Heart left ventricle (tissue), 16 donors: ENCODE measurements at regions of chr2 and their contacts with region 1.

Region 1: GRCh38 chr2:199704358-199705238 is 146.4 kb downstream of the FTCDNL1 start:
- DNase-seq: no peak
- ATAC-seq: no peak
- H3K4me3 ChIP-seq: no peak overlapping the region
- H3K27ac ChIP-seq: no peak overlapping the region
- H3K4me1 ChIP-seq: no peaks in the 10 kb centered on the region
- H3K27me3 ChIP-seq: no peaks in the 10 kb centered on the region
- CTCF ChIP-seq: peak; percentile 9 to 46 (median 38)
- POLR2A ChIP-seq: no peak

Region 2: DNA sequence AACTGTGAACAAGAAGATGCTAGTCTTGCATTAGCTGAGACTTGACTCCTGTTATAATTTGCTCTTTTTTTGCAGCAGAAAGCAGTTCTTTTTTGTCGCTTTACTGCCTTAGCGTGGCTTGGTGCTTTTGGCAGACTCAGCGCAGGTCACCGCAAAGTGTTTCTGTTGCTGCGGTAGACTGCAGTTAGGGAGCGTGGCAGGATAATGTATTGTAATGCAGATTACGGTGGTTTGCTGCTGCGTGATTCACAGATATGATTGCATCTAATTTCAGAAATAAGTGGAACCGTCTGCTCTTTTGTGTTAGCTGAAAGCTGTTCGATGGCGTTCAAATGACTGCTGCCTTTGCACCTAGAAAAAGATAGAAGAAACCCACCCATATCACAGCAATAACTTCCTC is 115.3 kb before region 1 on chr2:
- intact Hi-C with region 1: no loop called
- DNase-seq: no peak
- ATAC-seq: no peak
- H3K4me3 ChIP-seq: no peak overlapping the region
- H3K27ac ChIP-seq: no peak overlapping the region
- H3K4me1 ChIP-seq: no peaks in the 10 kb centered on the region
- H3K27me3 ChIP-seq: peaks cover 0 to 18% (median 0%) of the 10 kb centered on the region in 9 donors
- CTCF ChIP-seq: no peak
- POLR2A ChIP-seq: no peak

Region 3: DNA sequence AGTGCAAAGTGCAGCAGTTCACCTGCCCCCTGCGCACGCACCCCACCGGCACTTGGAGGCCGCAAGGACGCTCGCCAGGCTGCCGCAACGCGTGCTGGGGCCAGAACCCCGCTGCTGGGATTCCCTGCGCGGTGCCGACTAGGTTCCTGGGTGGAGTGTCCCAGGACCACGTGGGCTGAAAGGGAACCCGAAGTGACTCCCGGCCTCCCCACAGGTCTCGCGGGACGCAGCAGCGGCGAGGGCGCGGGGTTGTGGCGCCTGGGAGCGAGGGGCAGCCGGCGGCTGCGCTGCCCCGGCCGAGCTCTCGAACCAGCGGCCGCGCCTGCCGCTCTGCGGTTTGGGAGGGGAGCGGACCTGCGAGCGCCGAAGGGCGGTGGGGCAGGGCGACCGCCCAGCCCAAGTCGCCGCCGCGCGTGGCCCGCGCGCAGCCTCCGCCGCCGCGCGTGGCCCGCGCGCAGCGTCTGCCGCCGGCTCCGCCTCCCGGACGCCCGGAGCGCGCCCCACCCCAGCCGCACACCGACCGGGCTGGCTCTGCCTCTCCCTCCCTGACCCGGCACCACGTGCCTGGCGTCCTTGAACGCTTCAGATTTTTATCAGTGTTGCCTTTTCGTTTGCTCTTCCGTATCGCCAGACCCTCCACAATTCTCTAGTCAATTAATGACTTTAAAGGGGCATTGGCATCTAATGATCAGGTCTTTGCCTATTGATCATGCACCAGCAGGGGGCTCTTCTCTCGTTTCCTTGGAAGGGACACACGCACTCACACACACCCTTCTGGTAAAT is 146.3 kb after region 1 on chr2 and contains the start of gene FTCDNL1:
- intact Hi-C with region 1: loop called in 1 of 10 experiments (anchors 10 kb)
- DNase-seq: peak; percentile 56 to 80 (median 68)
- ATAC-seq: peak; percentile 81 to 96 (median 94)
- H3K4me3 ChIP-seq: peak within 1 kb of the TSS; percentile 39 to 79 (median 64)
- H3K27ac ChIP-seq: peak within 1 kb of the TSS in 5 of 12 donors; percentile 15 to 74 (median 51)
- H3K4me1 ChIP-seq: peaks cover 0 to 19% (median 0%) of the 10 kb centered on the region in 12 donors
- H3K27me3 ChIP-seq: peaks cover 0 to 7% (median 0%) of the 10 kb centered on the region in 9 donors
- CTCF ChIP-seq: peak; percentile 15 to 66 (median 38)
- POLR2A ChIP-seq: no peak
- total RNA-seq, gene FTCDNL1: 0.83 to 9.6 (median 2.9) TPM

Region 4: GRCh38 chr2:199861132-199861774 is 156.7 kb after region 1 on chr2:
- intact Hi-C with region 1: loop called in 9 of 10 experiments (anchors 5 to 10 kb)
- DNase-seq: no peak
- ATAC-seq: no peak
- H3K4me3 ChIP-seq: no peak overlapping the region
- H3K27ac ChIP-seq: no peak overlapping the region
- H3K4me1 ChIP-seq: no peaks in the 10 kb centered on the region
- H3K27me3 ChIP-seq: peaks cover 0 to 15% (median 0%) of the 10 kb centered on the region in 9 donors
- CTCF ChIP-seq: peak in 11 of 12 donors; percentile 7 to 59 (median 40)
- POLR2A ChIP-seq: no peak

Region 5: DNA sequence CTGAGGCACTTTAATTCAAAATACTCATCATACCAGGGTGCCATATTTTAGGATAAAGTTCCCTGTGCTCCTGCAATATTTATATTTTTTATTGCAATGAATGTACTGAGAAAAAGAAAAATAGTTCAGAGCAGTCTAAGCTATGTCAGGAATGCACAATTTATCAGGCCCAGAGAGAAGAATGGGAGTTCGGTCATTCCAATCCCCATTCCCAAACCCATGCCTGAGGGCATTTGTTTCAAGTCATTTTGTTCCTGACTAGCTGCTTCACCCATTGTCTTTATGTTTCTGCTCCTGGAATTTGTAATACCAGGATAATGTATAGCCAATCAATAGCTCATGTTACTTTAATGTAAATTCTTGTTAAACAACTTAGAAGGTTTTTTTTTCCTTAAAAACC is 170.8 kb after region 1 on chr2:
- intact Hi-C with region 1: loop called in 1 of 10 experiments (anchors 10 kb)
- DNase-seq: no peak
- ATAC-seq: no peak
- H3K4me3 ChIP-seq: no peak overlapping the region
- H3K27ac ChIP-seq: no peak overlapping the region
- H3K4me1 ChIP-seq: no peaks in the 10 kb centered on the region
- H3K27me3 ChIP-seq: peaks cover 0 to 3% (median 0%) of the 10 kb centered on the region in 9 donors
- CTCF ChIP-seq: no peak
- POLR2A ChIP-seq: no peak